Natural killer cell (primary cell): ENCODE measurements at regions of chr7 and their contacts with region 1.

Region 1: GRCh38 chr7:23546897-23547572 is 15.3 kb upstream of the TRA2A start:
- DNase-seq: peak; percentile 57 to 94
- ATAC-seq: peak; percentile 96 to 97 (median 96)
- H3K4me3 ChIP-seq: no peak overlapping the region
- H3K4me3 Mint-ChIP-seq: no peak overlapping the region
- H3K27ac ChIP-seq: no peak overlapping the region
- H3K27ac Mint-ChIP-seq: no peak overlapping the region
- H3K4me1 ChIP-seq: peaks cover 4% of the 10 kb centered on the region
- H3K4me1 Mint-ChIP-seq: no peaks in the 10 kb centered on the region
- H3K27me3 ChIP-seq: no peaks in the 10 kb centered on the region
- H3K27me3 Mint-ChIP-seq: no peaks in the 10 kb centered on the region
- CTCF ChIP-seq: peak; percentile 95

Region 2: DNA sequence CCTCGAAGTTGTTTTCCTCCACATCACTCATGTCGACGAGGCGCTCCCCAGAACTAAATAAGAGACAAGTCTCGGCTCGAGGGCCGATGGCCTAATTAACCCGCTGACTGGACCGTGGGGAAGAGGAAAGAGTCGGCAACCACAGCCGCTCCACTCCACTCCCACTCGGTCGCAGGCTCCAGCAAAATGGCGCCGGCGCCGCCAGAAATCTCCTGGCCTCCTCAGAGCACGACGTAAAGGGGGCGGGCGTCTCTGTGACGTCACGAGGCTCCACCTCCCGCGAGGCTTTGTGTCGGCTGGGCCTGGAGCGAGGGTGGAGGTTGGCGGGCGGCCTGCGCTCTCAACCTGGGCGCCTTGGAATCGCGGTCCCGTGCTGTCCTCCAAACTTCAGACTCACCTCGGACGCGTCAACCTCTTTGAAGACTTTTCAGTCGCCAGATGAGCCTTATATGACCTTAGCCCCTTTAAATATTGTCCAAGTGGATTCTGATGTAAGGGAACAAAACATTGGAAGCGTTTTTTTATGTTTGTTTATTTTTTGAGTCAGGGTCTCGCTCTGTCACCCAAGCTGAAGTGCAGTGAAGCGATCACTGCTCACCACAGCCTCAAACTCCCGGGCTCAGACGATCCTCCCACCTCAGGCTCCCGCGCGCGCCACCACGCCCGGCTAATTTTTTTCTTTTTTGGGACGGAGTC is 15.1 kb before region 1 on chr7 and contains the start of gene TRA2A:
- intact Hi-C with region 1: loop called (anchors 2 kb)
- DNase-seq: peak; percentile 98
- ATAC-seq: peak; percentile 82 to 97 (median 90)
- H3K4me3 ChIP-seq: peak within 1 kb of the TSS; percentile 95
- H3K4me3 Mint-ChIP-seq: peak within 1 kb of the TSS; percentile 100
- H3K27ac ChIP-seq: peak within 1 kb of the TSS; percentile 99
- H3K27ac Mint-ChIP-seq: peak within 1 kb of the TSS; percentile 99 to 100
- H3K4me1 ChIP-seq: peaks cover 22% of the 10 kb centered on the region
- H3K4me1 Mint-ChIP-seq: peaks cover 46 to 52% of the 10 kb centered on the region in 2 donors
- H3K27me3 ChIP-seq: no peaks in the 10 kb centered on the region
- H3K27me3 Mint-ChIP-seq: no peaks in the 10 kb centered on the region
- CTCF ChIP-seq: no peak
- total RNA-seq, gene TRA2A: 269 to 385 (median 324) TPM

Region 3: GRCh38 chr7:23679898-23680413 is 132.9 kb after region 1 on chr7 and contains the start of gene FAM221A:
- intact Hi-C with region 1: no loop called
- DNase-seq: peak; percentile 69 to 89
- ATAC-seq: peak; percentile 98 to 99 (median 98)
- H3K4me3 ChIP-seq: peak within 1 kb of the TSS; percentile 77
- H3K4me3 Mint-ChIP-seq: peak within 1 kb of the TSS; percentile 93
- H3K27ac ChIP-seq: peak within 1 kb of the TSS; percentile 49
- H3K27ac Mint-ChIP-seq: peak within 1 kb of the TSS; percentile 58 to 59
- H3K4me1 ChIP-seq: peaks cover 12% of the 10 kb centered on the region
- H3K4me1 Mint-ChIP-seq: peaks cover 8% of the 10 kb centered on the region in 2 donors
- H3K27me3 ChIP-seq: no peaks in the 10 kb centered on the region
- H3K27me3 Mint-ChIP-seq: peaks cover 0 to 16% of the 10 kb centered on the region in 2 donors
- CTCF ChIP-seq: peak; percentile 76
- total RNA-seq, gene FAM221A: 5.7 to 7.4 (median 6.9) TPM

Region 4: GRCh38 chr7:23712368-23713284 is 165.6 kb after region 1 on chr7:
- intact Hi-C with region 1: loop called (anchors 1 kb)
- DNase-seq: peak in 1 of 2 donors; percentile 72
- ATAC-seq: no peak
- H3K4me3 ChIP-seq: no peak overlapping the region
- H3K4me3 Mint-ChIP-seq: no peak overlapping the region
- H3K27ac ChIP-seq: no peak overlapping the region
- H3K27ac Mint-ChIP-seq: no peak overlapping the region
- H3K4me1 ChIP-seq: no peaks in the 10 kb centered on the region
- H3K4me1 Mint-ChIP-seq: peaks cover 0 to 5% of the 10 kb centered on the region in 2 donors
- H3K27me3 ChIP-seq: peaks cover 2% of the 10 kb centered on the region
- H3K27me3 Mint-ChIP-seq: peaks cover 0 to 5% of the 10 kb centered on the region in 2 donors
- CTCF ChIP-seq: peak; percentile 71

Region 5: DNA sequence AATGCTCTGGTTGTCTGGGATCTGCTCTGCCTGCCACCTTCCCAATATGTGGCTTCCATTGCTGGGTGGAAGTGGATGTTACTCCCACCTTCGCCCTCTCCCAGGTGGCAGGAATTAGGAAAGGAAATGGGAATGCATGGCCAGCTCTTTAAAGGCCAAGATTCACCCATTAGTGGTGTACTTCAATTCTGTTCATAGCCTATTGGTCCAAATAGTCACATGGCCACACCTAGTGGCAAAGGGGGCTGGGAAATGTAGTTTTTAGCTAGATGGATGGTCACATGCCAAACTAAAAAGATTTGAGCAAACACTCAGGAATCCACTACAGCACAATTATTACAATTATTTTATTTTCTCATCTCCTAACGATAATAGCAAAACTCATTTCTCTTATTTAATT is 872.0 kb after region 1 on chr7:
- intact Hi-C with region 1: no loop called
- DNase-seq: peak in 1 of 2 donors; percentile 9
- ATAC-seq: peak in 1 of 3 donors; percentile 46
- H3K4me3 ChIP-seq: no peak overlapping the region
- H3K4me3 Mint-ChIP-seq: no peak overlapping the region
- H3K27ac ChIP-seq: no peak overlapping the region
- H3K27ac Mint-ChIP-seq: no peak overlapping the region
- H3K4me1 ChIP-seq: no peaks in the 10 kb centered on the region
- H3K4me1 Mint-ChIP-seq: no peaks in the 10 kb centered on the region
- H3K27me3 ChIP-seq: no peaks in the 10 kb centered on the region
- H3K27me3 Mint-ChIP-seq: peaks cover 11 to 17% of the 10 kb centered on the region in 2 donors
- CTCF ChIP-seq: no peak